ENCODE measurements at regions of chr16 and their contacts with region 1.

Region 1: DNA sequence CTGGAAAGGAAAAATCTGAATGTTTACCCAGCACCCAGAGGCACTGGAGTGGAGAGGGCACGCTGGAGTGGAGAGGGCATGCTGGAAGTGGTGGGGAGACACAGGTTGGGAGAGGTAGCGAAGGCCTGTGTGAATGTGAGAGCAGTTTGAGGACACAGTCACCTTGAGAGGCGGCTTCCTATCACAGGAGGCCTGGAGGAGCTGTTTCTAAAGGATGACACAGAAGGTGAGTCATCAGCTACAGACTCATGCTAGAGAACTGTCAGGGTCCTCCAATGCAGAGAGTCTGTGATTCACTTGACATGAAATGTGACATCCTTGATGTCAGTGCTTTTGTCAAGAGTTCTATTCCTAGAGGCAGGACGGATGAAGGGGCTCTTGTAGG is 13.8 kb downstream of the CTRL start:
- DNase-seq: peak; percentile 67 to 86
- ATAC-seq: peak; percentile 92
- H3K4me3 ChIP-seq: no peak overlapping the region
- H3K27ac ChIP-seq: peak overlapping the region; percentile 86 to 99 (median 95)
- H3K4me1 ChIP-seq: peaks cover 78 to 80% of the 10 kb centered on the region in 2 donors
- H3K27me3 ChIP-seq: no peaks in the 10 kb centered on the region
- CTCF ChIP-seq: no peak
- POLR2A ChIP-seq: peak in 1 of 2 donors; percentile 36

Region 2: DNA sequence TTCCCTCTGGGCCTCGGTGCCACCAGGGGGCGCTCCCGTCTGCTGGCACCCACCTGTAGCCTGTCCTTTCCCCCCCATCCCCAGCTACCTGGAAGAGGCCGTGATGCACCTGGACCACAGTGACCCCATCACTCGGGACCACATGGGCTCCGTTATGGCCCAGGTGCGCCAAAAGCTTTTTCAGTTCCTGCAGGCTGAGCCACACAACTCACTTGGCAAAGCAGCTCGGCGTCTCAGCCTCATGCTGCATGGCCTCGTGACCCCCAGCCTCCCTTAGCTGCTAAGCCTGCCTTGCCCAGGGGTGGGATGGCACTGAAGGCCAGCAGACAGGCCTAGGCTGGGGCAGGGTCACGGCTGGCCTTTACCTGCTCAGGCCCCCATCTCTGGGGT is 34.0 kb before region 1 on chr16:
- in situ Hi-C with region 1: no loop called
- intact Hi-C with region 1: loop called (anchors 2 kb)
- DNase-seq: peak in 1 of 2 donors; percentile 64
- ATAC-seq: peak in 1 of 2 donors; percentile 22
- H3K4me3 ChIP-seq: no peak overlapping the region
- H3K27ac ChIP-seq: peak overlapping the region; percentile 87 to 95 (median 90)
- H3K4me1 ChIP-seq: peaks cover 51 to 52% of the 10 kb centered on the region in 2 donors
- H3K27me3 ChIP-seq: no peaks in the 10 kb centered on the region
- CTCF ChIP-seq: peak; percentile 76 to 91 (median 91)
- POLR2A ChIP-seq: no peak

Region 3: DNA sequence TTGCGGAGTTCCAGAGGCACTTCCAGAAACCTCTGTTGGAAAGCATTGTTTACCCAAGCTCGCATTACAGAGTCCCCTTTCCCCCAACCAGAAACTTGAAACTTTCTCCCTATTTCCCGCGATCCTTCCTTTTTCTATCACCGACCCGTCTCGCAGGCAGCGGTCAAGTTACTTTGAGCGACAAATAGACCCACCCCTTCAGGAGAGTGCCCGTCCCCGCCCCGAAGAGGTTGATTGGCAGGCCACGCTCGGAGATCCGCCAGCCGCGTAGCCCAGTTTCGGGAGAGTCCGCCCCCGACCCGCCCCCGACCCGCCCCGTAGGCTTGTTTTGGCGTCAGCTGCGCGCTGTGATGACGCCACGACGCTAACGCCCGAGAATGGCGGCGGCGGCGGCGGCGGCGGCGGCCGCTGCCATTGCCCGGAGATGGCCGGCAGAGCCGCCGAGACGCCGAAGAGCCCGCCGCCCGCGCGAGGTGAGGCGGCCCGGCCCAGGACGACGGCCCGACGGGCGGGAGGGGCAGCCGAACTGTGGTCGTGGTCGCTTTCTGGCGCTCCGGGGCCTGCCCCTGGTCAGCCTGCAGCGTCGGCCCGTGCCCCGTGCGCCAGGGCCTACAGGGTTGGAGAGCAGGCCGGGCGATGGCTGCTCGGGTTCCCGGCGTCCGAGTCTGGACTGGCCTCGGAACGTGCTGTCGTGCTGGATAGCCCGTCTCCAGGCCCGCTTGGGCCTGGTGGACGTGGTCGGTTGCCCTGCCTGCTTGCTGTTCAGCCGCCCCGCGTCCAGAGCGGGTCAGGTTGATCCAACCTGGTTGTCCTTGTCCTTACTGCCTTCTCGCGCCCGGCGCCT is 24.7 kb before region 1 on chr16 and contains the start of gene PSKH1:
- in situ Hi-C with region 1: no loop called
- intact Hi-C with region 1: loop called (anchors 1 kb)
- DNase-seq: peak; percentile 95 to 97
- ATAC-seq: peak; percentile 93 to 95
- H3K4me3 ChIP-seq: peak within 1 kb of the TSS; percentile 87 to 99 (median 91)
- H3K27ac ChIP-seq: peak within 1 kb of the TSS; percentile 90 to 100 (median 96)
- H3K4me1 ChIP-seq: peaks cover 44 to 50% of the 10 kb centered on the region in 2 donors
- H3K27me3 ChIP-seq: no peaks in the 10 kb centered on the region
- CTCF ChIP-seq: peak in 2 of 5 experiments; percentile 20 to 24
- POLR2A ChIP-seq: peak; percentile 98
- total RNA-seq, gene PSKH1: 4.1 to 12.7 (median 6.9) TPM

Measured in gastrocnemius medialis (tissue), 4 donors.